Gastrocnemius medialis (tissue), 4 donors: ENCODE measurements at regions of chr3 and their contacts with region 1.

Region 1: GRCh38 chr3:99810403-99810802 is 7.3 kb upstream of the CMSS1 start:
- DNase-seq: no peak
- ATAC-seq: peak in 1 of 2 donors; percentile 25
- H3K4me3 ChIP-seq: no peak overlapping the region
- H3K27ac ChIP-seq: no peak overlapping the region
- H3K4me1 ChIP-seq: peaks cover 5 to 7% of the 10 kb centered on the region in 2 donors
- H3K27me3 ChIP-seq: no peaks in the 10 kb centered on the region
- CTCF ChIP-seq: no peak
- POLR2A ChIP-seq: no peak

Region 2: GRCh38 chr3:98274914-98275313 is 1535.5 kb before region 1 on chr3:
- in situ Hi-C with region 1: no loop called
- intact Hi-C with region 1: no loop called
- DNase-seq: no peak
- ATAC-seq: no peak
- H3K4me3 ChIP-seq: no peak overlapping the region
- H3K27ac ChIP-seq: no peak overlapping the region
- H3K4me1 ChIP-seq: no peaks in the 10 kb centered on the region
- H3K27me3 ChIP-seq: no peaks in the 10 kb centered on the region
- CTCF ChIP-seq: no peak
- POLR2A ChIP-seq: no peak

Region 3: DNA sequence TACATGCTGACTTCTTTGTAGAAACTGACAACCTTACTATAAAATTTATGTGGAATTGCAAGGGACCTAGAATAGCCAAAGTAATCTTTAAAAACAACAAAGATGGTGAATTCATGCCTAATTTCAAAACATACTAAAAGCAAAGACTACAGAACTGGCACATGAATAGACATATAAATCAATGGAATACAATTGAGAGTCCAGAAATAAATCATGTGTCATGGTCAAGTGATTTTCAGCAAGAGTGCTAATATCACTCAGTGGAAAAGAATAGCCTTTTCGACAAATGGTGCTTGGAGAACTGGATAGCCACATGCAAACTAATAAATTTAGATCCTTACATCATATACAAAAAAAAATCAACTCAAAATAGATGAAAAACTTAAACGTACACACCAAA is 1501.3 kb after region 1 on chr3:
- in situ Hi-C with region 1: no loop called
- intact Hi-C with region 1: loop called (anchors 5 kb)
- DNase-seq: no peak
- ATAC-seq: no peak
- H3K4me3 ChIP-seq: no peak overlapping the region
- H3K27ac ChIP-seq: peak overlapping the region in 2 of 4 donors; percentile 21 to 40
- H3K4me1 ChIP-seq: peaks cover 7 to 16% of the 10 kb centered on the region in 2 donors
- H3K27me3 ChIP-seq: no peaks in the 10 kb centered on the region
- CTCF ChIP-seq: no peak
- POLR2A ChIP-seq: no peak